ENCODE measurements at regions of chr20 and their contacts with region 1.

Region 1: GRCh38 chr20:4607287-4607713 is 114.4 kb upstream of the PRND start:
- DNase-seq: peak; percentile 78
- ATAC-seq: peak; percentile 89
- H3K4me3 ChIP-seq: no peak overlapping the region
- H3K27ac ChIP-seq: no peak overlapping the region
- H3K4me1 ChIP-seq: no peaks in the 10 kb centered on the region
- H3K27me3 ChIP-seq: peaks cover 4 to 38% of the 10 kb centered on the region in 2 experiments
- CTCF ChIP-seq: peak; percentile 95
- EP300 ChIP-seq: no peak
- POLR2A ChIP-seq: no peak
- RAD21 ChIP-seq: peak; percentile 96

Region 2: GRCh38 chr20:5090191-5090590 is 482.9 kb after region 1 on chr20:
- CTCF ChIA-PET with region 1: no interaction called
- POLR2A ChIA-PET with region 1: no interaction called
- in situ Hi-C with region 1: loop called (anchors 10 kb)
- intact Hi-C with region 1: no loop called
- DNase-seq: no peak
- ATAC-seq: no peak
- H3K4me3 ChIP-seq: no peak overlapping the region
- H3K27ac ChIP-seq: no peak overlapping the region
- H3K4me1 ChIP-seq: no peaks in the 10 kb centered on the region
- H3K27me3 ChIP-seq: no peaks in the 10 kb centered on the region
- CTCF ChIP-seq: no peak
- EP300 ChIP-seq: no peak
- POLR2A ChIP-seq: no peak
- RAD21 ChIP-seq: no peak

Region 3: GRCh38 chr20:5279661-5280060 is 672.4 kb after region 1 on chr20:
- CTCF ChIA-PET with region 1: no interaction called
- POLR2A ChIA-PET with region 1: no interaction called
- in situ Hi-C with region 1: no loop called
- intact Hi-C with region 1: no loop called
- DNase-seq: no peak
- ATAC-seq: no peak
- H3K4me3 ChIP-seq: no peak overlapping the region
- H3K27ac ChIP-seq: no peak overlapping the region
- H3K4me1 ChIP-seq: no peaks in the 10 kb centered on the region
- H3K27me3 ChIP-seq: peaks cover 3 to 4% of the 10 kb centered on the region in 2 experiments; a peak in 2 of 5 replicates
- CTCF ChIP-seq: no peak
- EP300 ChIP-seq: no peak
- POLR2A ChIP-seq: no peak
- RAD21 ChIP-seq: no peak

Measured in HepG2 (cell line).